RWPE1 (cell line): ENCODE measurements at regions of chr17 and their contacts with region 1.

Region 1: DNA sequence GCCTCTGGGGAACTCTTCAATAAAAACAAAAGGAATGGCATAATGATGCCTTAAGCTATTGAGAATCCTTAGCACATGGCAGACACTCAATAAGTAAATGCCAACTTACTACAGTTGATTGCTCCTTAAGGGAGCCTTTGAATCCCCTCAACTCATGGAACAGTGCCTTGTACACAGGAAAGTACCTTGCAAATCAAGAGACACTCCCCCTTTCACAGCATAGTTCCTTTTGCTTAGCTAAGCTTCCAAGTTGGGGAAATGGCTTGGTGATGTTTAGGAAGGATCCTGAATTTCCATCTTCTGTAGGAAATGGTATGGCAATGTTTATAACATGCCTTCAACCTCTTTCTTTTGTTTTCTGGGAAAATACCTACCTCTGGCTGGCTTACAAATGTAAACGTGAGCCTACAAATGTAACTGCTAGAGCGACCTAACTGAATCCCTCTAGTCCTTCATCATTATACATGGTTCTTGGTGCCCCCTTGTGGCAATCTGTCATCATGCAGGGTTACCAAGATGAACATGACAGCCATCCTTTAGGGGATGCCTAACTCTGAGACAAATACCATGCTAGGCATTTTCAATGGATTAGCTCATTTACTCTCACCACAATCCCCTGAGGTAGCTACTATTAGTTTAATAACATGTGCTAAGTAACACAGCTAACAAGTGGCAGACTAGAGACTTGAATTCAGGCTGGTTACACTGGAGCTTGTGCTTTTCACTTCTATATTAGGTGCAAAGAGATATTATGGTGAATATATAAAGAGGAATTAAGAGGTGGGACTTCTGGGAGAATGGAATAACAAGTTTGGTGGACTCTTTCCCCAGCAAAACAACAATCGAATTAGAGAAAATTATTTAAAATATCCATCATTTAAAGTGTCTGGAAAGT is 65.0 kb downstream of the MMD start:
- DNase-seq: peak; percentile 79
- H3K27ac ChIP-seq: no peak overlapping the region
- CTCF ChIP-seq: peak; percentile 87

Region 2: GRCh38 chr17:54754560-54754959 is 602.1 kb before region 1 on chr17:
- CTCF ChIA-PET with region 1: no interaction called
- POLR2A ChIA-PET with region 1: no interaction called
- DNase-seq: no peak
- H3K27ac ChIP-seq: no peak overlapping the region
- CTCF ChIP-seq: no peak

Region 3: DNA sequence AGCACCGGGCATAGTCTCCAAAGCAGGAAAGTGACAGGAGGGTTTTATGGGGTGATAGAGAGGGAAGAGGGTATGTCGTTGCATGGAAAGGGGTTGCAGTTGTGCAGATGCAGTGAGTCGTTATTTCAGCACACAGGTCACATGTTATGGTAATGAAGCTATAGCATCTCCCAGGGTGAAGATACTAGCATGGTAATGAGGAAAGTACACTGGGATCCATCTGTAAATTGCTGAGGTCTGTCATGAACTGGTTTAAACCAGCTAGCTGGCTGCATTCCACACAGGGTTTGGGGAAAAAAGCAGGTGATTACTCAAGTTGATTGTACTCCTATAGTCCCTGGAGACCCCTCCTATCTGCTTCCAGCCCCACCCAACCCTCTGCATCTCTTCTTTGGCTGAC is 399.9 kb before region 1 on chr17:
- CTCF ChIA-PET with region 1: interaction called, 10 read pairs
- POLR2A ChIA-PET with region 1: no interaction called
- DNase-seq: no peak
- H3K27ac ChIP-seq: no peak overlapping the region
- CTCF ChIP-seq: no peak

Region 4: GRCh38 chr17:55334285-55334684 is 22.4 kb before region 1 on chr17:
- CTCF ChIA-PET with region 1: no interaction called
- POLR2A ChIA-PET with region 1: no interaction called
- DNase-seq: no peak
- H3K27ac ChIP-seq: no peak overlapping the region
- CTCF ChIP-seq: no peak